ENCODE measurements at regions of chr3 and their contacts with region 1.

Region 1: GRCh38 chr3:112293368-112294321 is at the start of gene SLC9C1:
- DNase-seq: peak in 22 of 35 experiments; percentile 11 to 75 (median 26)
- ATAC-seq: peak; percentile 65 to 85 (median 73)
- H3K4me3 ChIP-seq: peak within 1 kb of the TSS in 1 of 2 donors; percentile 10
- H3K4me3 Mint-ChIP-seq: peak within 1 kb of the TSS; percentile 63 to 69 (median 64)
- H3K27ac ChIP-seq: no peak within 1 kb of the TSS
- H3K27ac Mint-ChIP-seq: peak within 1 kb of the TSS in 1 of 2 donors; percentile 62
- H3K4me1 ChIP-seq: peaks cover 0 to 3% of the 10 kb centered on the region in 2 experiments
- H3K4me1 Mint-ChIP-seq: peaks cover 19 to 28% (median 24%) of the 10 kb centered on the region in 3 donors
- H3K27me3 ChIP-seq: no peaks in the 10 kb centered on the region
- H3K27me3 Mint-ChIP-seq: no peaks in the 10 kb centered on the region
- total RNA-seq, gene SLC9C1: not detected

Region 2: DNA sequence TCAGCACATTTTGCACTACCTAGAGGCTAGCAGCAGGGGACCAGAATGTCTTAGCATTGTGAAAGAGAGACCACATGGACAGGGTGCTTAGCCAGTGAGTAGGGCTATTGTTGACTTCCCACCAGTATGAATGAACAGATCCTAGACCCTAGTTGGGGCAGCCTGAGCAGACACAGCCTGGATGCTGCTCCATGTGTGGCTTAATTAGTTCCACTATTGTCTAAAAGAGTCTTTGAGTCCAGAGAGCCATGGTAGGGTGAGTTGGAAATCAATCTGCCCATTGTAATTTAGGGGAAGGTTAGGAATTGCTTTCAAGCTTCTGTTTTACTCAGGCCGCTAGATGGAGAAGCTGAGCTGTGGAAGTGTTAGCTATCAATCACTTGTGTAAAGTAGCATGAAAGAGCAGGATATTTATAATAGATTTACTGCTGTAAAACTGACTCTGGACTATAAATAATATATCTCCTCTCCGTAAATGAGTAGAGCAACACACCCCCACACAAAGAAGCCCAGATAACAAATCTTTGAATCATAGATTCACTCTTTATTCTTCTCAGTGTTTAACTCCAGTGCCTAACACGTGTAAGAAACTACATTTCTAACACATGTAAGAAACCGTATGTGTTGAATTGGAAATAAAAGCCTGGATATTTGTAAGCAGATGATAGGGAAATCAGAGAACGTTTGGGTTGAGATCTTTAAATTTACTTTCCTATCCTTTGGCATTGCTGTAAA is 156.5 kb before region 1 on chr3:
- CTCF ChIA-PET with region 1: interaction called, 9 to 12 read pairs
- POLR2A ChIA-PET with region 1: no interaction called
- DNase-seq: peak in 27 of 35 experiments; percentile 12 to 68 (median 29)
- ATAC-seq: peak in 1 of 4 experiments; percentile 38
- H3K4me3 ChIP-seq: no peak overlapping the region
- H3K4me3 Mint-ChIP-seq: no peak overlapping the region
- H3K27ac ChIP-seq: no peak overlapping the region
- H3K27ac Mint-ChIP-seq: peak overlapping the region; percentile 73 to 83
- H3K4me1 ChIP-seq: peaks cover 25 to 40% of the 10 kb centered on the region in 2 experiments
- H3K4me1 Mint-ChIP-seq: peaks cover 58 to 63% (median 61%) of the 10 kb centered on the region in 3 donors
- H3K27me3 ChIP-seq: no peaks in the 10 kb centered on the region
- H3K27me3 Mint-ChIP-seq: no peaks in the 10 kb centered on the region

Region 3: DNA sequence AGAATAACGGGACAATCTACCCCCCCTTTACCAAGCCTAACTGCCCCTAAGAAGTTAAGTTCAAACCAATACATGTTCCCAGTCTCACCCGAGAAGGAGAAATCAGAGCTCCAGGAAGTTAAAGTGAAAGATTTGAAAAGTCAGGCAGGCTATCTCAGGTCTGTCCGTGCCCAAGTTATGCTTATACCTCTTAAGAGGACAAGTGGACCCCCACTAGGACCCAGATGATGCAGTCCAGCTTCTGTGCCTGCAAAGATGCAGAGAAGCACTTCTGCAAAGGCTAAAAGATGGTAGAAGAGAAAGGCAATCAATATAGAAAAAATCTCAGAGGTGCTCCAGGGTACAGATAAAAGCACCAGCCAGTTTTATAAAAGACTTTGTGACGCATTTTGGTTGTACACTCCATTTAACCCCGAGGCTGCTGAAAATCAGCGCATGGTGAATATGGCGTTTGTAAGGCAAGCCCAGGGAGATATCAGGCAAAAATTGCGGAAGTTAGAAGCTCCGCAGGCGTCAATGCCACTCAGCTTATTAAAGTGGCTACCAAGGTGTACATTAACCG is 10.2 kb after region 1 on chr3:
- CTCF ChIA-PET with region 1: interaction called, 11 to 15 read pairs
- POLR2A ChIA-PET with region 1: interaction called in 1 of 2 experiments, 3 read pairs
- DNase-seq: peak in 16 of 35 experiments; percentile 3 to 47 (median 19)
- ATAC-seq: peak; percentile 48 to 83 (median 70)
- H3K4me3 ChIP-seq: peak overlapping the region; percentile 47 to 67
- H3K4me3 Mint-ChIP-seq: no peak overlapping the region
- H3K27ac ChIP-seq: peak overlapping the region; percentile 27
- H3K27ac Mint-ChIP-seq: no peak overlapping the region
- H3K4me1 ChIP-seq: peaks cover 0 to 16% of the 10 kb centered on the region in 2 experiments
- H3K4me1 Mint-ChIP-seq: peaks cover 1% of the 10 kb centered on the region in 3 donors
- H3K27me3 ChIP-seq: no peaks in the 10 kb centered on the region
- H3K27me3 Mint-ChIP-seq: no peaks in the 10 kb centered on the region

Region 4: DNA sequence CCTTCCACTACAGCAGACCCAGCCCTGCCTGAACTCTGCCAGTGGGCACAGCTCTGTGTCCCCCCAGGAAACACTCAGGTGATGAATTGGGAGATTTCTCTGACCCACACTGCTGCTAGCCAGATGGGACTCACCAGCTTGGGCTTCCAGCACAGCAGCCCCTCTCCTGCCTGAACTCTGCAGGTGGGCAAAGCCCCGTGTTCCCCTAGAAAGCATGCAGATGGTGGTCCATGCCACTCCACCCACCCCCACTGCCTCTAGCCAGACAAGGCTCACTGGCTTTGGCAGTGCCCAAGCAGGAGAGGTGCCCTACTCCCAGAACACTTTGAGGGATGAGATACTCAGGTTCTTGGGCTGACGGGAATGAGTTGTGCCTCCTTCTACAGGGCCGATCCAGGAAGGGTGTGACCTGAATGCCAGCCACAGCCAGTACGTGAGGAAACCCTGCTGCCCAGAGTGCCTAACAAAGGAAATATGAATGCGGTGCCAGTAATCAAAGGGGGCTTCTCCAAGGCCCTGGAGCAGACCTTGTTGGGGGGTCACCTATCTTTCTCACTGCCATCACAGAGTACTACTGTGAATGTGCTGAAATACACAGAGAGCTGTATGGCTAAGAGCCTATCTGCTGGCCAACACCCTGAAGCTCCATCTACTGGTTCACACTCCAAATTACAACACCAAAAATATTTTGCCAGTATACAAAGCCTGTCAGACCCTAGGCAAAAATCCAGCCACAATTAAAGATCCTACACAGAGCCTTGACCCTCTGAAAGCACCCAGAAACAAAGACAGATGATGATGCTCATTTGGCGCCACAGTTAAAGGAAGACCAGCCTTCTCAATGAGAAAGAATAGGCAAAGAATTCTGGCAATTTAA is 143.7 kb after region 1 on chr3:
- CTCF ChIA-PET with region 1: interaction called in 1 of 2 experiments, 12 read pairs
- POLR2A ChIA-PET with region 1: no interaction called
- DNase-seq: peak in 3 of 35 experiments; percentile 0 to 52 (median 1)
- ATAC-seq: peak; percentile 37 to 58 (median 54)
- H3K4me3 ChIP-seq: no peak overlapping the region
- H3K4me3 Mint-ChIP-seq: peak overlapping the region in 1 of 3 donors; percentile 8
- H3K27ac ChIP-seq: no peak overlapping the region
- H3K27ac Mint-ChIP-seq: peak overlapping the region in 1 of 2 donors; percentile 68
- H3K4me1 ChIP-seq: peaks cover 0 to 14% of the 10 kb centered on the region in 2 experiments
- H3K4me1 Mint-ChIP-seq: peaks cover 8 to 33% (median 8%) of the 10 kb centered on the region in 3 donors
- H3K27me3 ChIP-seq: peaks cover 0 to 5% of the 10 kb centered on the region in 2 experiments
- H3K27me3 Mint-ChIP-seq: no peaks in the 10 kb centered on the region

Region 5: DNA sequence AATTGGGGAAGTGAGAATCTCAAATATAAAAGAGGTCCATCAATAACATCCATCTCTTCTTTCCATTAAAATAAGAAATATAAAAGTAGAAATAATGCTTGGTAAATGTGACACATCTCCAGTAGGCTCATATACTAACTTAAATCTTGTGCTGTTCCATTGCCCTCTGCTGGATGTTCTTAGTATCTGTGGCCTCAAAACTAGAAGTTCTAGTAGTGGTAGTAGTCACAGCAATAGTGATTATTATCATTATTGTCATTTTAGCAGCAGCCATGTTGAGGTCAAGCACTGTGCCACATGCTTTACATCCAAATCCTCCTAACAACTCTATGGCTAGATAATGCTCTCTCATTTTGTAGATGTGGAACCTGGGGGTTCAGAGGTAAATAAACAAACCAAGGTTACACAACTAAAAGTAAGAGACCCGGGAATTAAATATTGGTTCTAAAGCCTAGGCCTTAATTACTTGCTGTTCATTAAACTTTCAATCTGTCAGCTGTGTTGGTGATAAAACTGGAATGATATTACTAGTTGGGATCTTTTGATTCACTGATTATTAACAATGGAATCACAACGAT is 225.9 kb after region 1 on chr3:
- CTCF ChIA-PET with region 1: interaction called, 9 to 29 read pairs
- POLR2A ChIA-PET with region 1: no interaction called
- DNase-seq: peak in 22 of 35 experiments; percentile 1 to 76 (median 26)
- ATAC-seq: peak; percentile 73 to 85 (median 80)
- H3K4me3 ChIP-seq: no peak overlapping the region
- H3K4me3 Mint-ChIP-seq: no peak overlapping the region
- H3K27ac ChIP-seq: no peak overlapping the region
- H3K27ac Mint-ChIP-seq: no peak overlapping the region
- H3K4me1 ChIP-seq: peaks cover 0 to 7% of the 10 kb centered on the region in 2 experiments
- H3K4me1 Mint-ChIP-seq: peaks cover 19 to 23% (median 20%) of the 10 kb centered on the region in 3 donors
- H3K27me3 ChIP-seq: no peaks in the 10 kb centered on the region
- H3K27me3 Mint-ChIP-seq: no peaks in the 10 kb centered on the region

Region 6: GRCh38 chr3:112531358-112531781 is 237.7 kb after region 1 on chr3:
- CTCF ChIA-PET with region 1: interaction called, 9 to 25 read pairs
- POLR2A ChIA-PET with region 1: interaction called in 1 of 2 experiments, 8 read pairs
- DNase-seq: peak in 1 of 35 experiments; percentile 60
- ATAC-seq: no peak
- H3K4me3 ChIP-seq: no peak overlapping the region
- H3K4me3 Mint-ChIP-seq: no peak overlapping the region
- H3K27ac ChIP-seq: no peak overlapping the region
- H3K27ac Mint-ChIP-seq: peak overlapping the region; percentile 57 to 75
- H3K4me1 ChIP-seq: no peaks in the 10 kb centered on the region
- H3K4me1 Mint-ChIP-seq: peaks cover 0 to 4% (median 3%) of the 10 kb centered on the region in 3 donors
- H3K27me3 ChIP-seq: no peaks in the 10 kb centered on the region
- H3K27me3 Mint-ChIP-seq: no peaks in the 10 kb centered on the region

Region 7: GRCh38 chr3:113204371-113204770 is 910.7 kb after region 1 on chr3:
- CTCF ChIA-PET with region 1: no interaction called
- POLR2A ChIA-PET with region 1: no interaction called
- DNase-seq: no peak
- ATAC-seq: no peak
- H3K4me3 ChIP-seq: no peak overlapping the region
- H3K4me3 Mint-ChIP-seq: no peak overlapping the region
- H3K27ac ChIP-seq: no peak overlapping the region
- H3K27ac Mint-ChIP-seq: no peak overlapping the region
- H3K4me1 ChIP-seq: no peaks in the 10 kb centered on the region
- H3K4me1 Mint-ChIP-seq: no peaks in the 10 kb centered on the region
- H3K27me3 ChIP-seq: peaks cover 2 to 3% of the 10 kb centered on the region in 2 experiments
- H3K27me3 Mint-ChIP-seq: peaks cover 27 to 31% of the 10 kb centered on the region in 2 donors

Measured in T-cell (primary cell).